ENCODE measurements at regions of chr21 and their contacts with region 1.

Region 1: GRCh38 chr21:42107881-42108553 is 36.9 kb downstream of the UMODL1 start:
- DNase-seq: peak; percentile 45 to 87 (median 68)
- ATAC-seq: peak; percentile 99
- H3K4me3 ChIP-seq: peak overlapping the region in 1 of 2 experiments; percentile 28
- H3K4me3 Mint-ChIP-seq: peak overlapping the region; percentile 69
- H3K27ac ChIP-seq: no peak overlapping the region
- H3K27ac Mint-ChIP-seq: peak overlapping the region; percentile 62
- H3K4me1 ChIP-seq: peaks cover 20% of the 10 kb centered on the region
- H3K4me1 Mint-ChIP-seq: peaks cover 9% of the 10 kb centered on the region
- H3K27me3 ChIP-seq: no peaks in the 10 kb centered on the region
- H3K27me3 Mint-ChIP-seq: peaks cover 4% of the 10 kb centered on the region
- CTCF ChIP-seq: peak; percentile 74

Region 2: DNA sequence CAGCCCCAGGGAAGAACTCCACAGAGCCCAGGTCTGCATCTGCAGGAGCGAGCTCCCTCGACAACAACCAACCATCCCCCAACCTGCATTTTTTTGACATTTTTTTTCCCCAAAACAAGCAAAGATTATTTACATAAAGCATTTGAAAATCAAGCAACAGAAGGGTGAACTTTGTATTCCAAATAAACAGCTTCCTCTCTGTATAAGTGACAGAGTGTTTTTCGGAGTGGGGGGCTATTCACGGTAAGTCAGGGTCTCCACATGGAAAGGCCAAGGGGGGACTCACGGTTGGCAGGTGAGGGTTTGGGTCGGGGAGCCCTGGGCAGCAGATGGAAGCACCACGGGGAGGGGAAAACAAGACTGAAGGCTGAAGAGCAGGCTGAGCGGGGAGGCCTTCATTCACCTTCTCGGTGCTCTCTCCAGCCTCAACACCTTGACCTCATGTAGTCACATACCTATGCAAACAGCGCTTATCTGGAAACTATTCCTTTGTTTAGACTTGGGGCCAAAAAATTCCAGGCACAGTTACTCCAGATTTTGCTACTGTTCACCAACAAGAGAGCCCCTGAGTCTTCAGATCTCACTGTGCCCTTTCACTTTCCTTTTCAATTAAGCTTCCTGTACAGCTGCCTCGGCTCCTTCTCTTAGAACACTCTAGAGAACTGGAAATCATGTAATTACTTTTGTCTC is 181.8 kb before region 1 on chr21:
- CTCF ChIA-PET with region 1: interaction called, 4 read pairs
- POLR2A ChIA-PET with region 1: interaction called, 4 read pairs
- intact Hi-C with region 1: loop called in 1 of 2 experiments (anchors 1 kb)
- DNase-seq: peak in 8 of 9 experiments; percentile 14 to 81 (median 32)
- ATAC-seq: peak; percentile 91
- H3K4me3 ChIP-seq: peak overlapping the region; percentile 53 to 64
- H3K4me3 Mint-ChIP-seq: peak overlapping the region; percentile 96
- H3K27ac ChIP-seq: peak overlapping the region; percentile 72 to 89
- H3K27ac Mint-ChIP-seq: peak overlapping the region; percentile 99
- H3K4me1 ChIP-seq: peaks cover 42% of the 10 kb centered on the region
- H3K4me1 Mint-ChIP-seq: peaks cover 55% of the 10 kb centered on the region
- H3K27me3 ChIP-seq: no peaks in the 10 kb centered on the region
- H3K27me3 Mint-ChIP-seq: no peaks in the 10 kb centered on the region
- CTCF ChIP-seq: no peak

Region 3: GRCh38 chr21:42002421-42002958 is 105.5 kb before region 1 on chr21:
- CTCF ChIA-PET with region 1: interaction called, 73 read pairs
- POLR2A ChIA-PET with region 1: no interaction called
- intact Hi-C with region 1: no loop called
- DNase-seq: peak in 7 of 9 experiments; percentile 15 to 54 (median 30)
- ATAC-seq: peak; percentile 68
- H3K4me3 ChIP-seq: no peak overlapping the region
- H3K4me3 Mint-ChIP-seq: peak overlapping the region; percentile 1
- H3K27ac ChIP-seq: no peak overlapping the region
- H3K27ac Mint-ChIP-seq: no peak overlapping the region
- H3K4me1 ChIP-seq: no peaks in the 10 kb centered on the region
- H3K4me1 Mint-ChIP-seq: peaks cover 28% of the 10 kb centered on the region
- H3K27me3 ChIP-seq: no peaks in the 10 kb centered on the region
- H3K27me3 Mint-ChIP-seq: no peaks in the 10 kb centered on the region
- CTCF ChIP-seq: no peak

Region 4: GRCh38 chr21:42073145-42074092 is 34.6 kb before region 1 on chr21:
- CTCF ChIA-PET with region 1: interaction called, 24 read pairs
- POLR2A ChIA-PET with region 1: interaction called, 3 read pairs
- intact Hi-C with region 1: no loop called
- DNase-seq: no peak
- ATAC-seq: no peak
- H3K4me3 ChIP-seq: no peak overlapping the region
- H3K4me3 Mint-ChIP-seq: peak overlapping the region; percentile 8
- H3K27ac ChIP-seq: no peak overlapping the region
- H3K27ac Mint-ChIP-seq: no peak overlapping the region
- H3K4me1 ChIP-seq: no peaks in the 10 kb centered on the region
- H3K4me1 Mint-ChIP-seq: peaks cover 17% of the 10 kb centered on the region
- H3K27me3 ChIP-seq: peaks cover 0 to 3% of the 10 kb centered on the region in 2 experiments
- H3K27me3 Mint-ChIP-seq: no peaks in the 10 kb centered on the region
- CTCF ChIP-seq: no peak

Region 5: DNA sequence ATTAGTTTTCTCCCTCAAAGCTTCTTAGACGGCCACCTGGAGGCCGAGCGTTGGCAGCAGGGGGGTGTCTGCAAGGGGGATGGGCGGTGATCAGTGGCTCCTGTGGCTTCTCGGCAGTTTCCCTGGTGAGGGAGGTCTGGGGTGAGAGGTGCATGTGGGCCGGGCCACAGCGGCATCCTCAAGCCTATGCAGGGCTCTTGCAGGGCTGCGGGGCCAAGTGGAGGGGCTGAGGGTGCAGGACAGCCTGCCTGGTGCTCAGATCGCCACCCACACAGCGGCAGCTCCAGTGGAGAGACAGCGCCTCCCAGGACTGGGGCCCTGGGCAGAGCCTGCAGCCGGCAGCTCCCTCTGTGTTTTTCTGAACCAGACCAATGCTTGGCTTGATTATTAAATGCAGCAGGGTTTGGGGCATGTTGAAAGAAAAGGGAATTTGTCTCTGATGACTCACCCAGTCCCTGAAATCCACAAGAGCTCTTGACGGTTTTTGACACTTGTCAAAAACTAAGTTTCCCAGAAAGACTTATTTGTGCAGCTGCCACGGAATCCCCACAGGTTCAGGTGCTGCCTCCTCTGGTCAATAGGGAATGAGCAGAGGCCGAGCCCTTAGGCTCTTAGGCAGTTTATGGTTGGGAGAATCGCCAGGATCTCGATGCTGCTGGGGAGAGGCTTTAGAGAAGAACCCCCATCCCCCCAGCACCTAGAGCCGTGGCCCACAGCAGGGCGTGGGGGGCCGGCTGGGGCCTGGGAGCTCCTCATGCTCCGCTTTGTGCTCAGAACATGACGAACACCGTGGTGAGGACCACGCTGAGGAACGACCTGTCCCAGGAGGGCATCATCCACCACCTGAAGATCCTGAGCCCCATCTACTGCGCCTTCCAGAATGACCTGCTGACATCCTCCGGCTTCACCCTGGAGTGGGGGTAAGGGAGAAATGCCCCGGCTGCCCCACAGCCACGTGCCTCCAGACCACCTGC is 17.8 kb after region 1 on chr21:
- CTCF ChIA-PET with region 1: interaction called, 10 read pairs
- POLR2A ChIA-PET with region 1: no interaction called
- intact Hi-C with region 1: no loop called
- DNase-seq: no peak
- ATAC-seq: no peak
- H3K4me3 ChIP-seq: no peak overlapping the region
- H3K4me3 Mint-ChIP-seq: no peak overlapping the region
- H3K27ac ChIP-seq: no peak overlapping the region
- H3K27ac Mint-ChIP-seq: no peak overlapping the region
- H3K4me1 ChIP-seq: no peaks in the 10 kb centered on the region
- H3K4me1 Mint-ChIP-seq: peaks cover 7% of the 10 kb centered on the region
- H3K27me3 ChIP-seq: peaks cover 0 to 16% of the 10 kb centered on the region in 2 experiments
- H3K27me3 Mint-ChIP-seq: peaks cover 34% of the 10 kb centered on the region
- CTCF ChIP-seq: no peak

Region 6: GRCh38 chr21:42199488-42200458 is 91.8 kb after region 1 on chr21:
- CTCF ChIA-PET with region 1: no interaction called
- POLR2A ChIA-PET with region 1: no interaction called
- intact Hi-C with region 1: no loop called
- DNase-seq: peak in 4 of 9 experiments; percentile 34 to 76 (median 48)
- ATAC-seq: peak; percentile 77
- H3K4me3 ChIP-seq: no peak overlapping the region
- H3K4me3 Mint-ChIP-seq: peak overlapping the region; percentile 5
- H3K27ac ChIP-seq: peak overlapping the region; percentile 15 to 40
- H3K27ac Mint-ChIP-seq: peak overlapping the region; percentile 89
- H3K4me1 ChIP-seq: peaks cover 39% of the 10 kb centered on the region
- H3K4me1 Mint-ChIP-seq: peaks cover 68% of the 10 kb centered on the region
- H3K27me3 ChIP-seq: no peaks in the 10 kb centered on the region
- H3K27me3 Mint-ChIP-seq: no peaks in the 10 kb centered on the region
- CTCF ChIP-seq: no peak

Region 7: DNA sequence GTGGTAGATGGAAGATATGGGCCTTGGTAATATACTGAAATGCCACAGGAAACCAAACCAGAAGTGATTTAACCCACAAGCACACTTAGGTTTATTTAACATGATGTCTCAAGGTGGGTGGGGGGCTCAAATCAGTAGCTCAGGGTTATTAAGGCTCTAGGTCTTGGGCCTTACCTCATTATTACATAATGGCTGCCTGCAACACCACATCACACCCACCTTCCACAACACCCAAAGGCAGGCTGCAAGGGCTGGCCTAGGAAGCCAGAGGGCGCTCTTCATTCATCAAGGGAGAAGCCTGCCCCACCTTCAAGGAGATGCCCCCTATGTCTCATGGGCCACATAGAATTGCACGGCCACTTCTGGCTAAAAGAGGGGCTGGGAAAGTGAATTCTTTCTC is 252.3 kb after region 1 on chr21:
- CTCF ChIA-PET with region 1: no interaction called
- POLR2A ChIA-PET with region 1: no interaction called
- intact Hi-C with region 1: no loop called
- DNase-seq: peak in 2 of 9 experiments; percentile 17 to 43
- ATAC-seq: no peak
- H3K4me3 ChIP-seq: no peak overlapping the region
- H3K4me3 Mint-ChIP-seq: no peak overlapping the region
- H3K27ac ChIP-seq: no peak overlapping the region
- H3K27ac Mint-ChIP-seq: no peak overlapping the region
- H3K4me1 ChIP-seq: peaks cover 8% of the 10 kb centered on the region
- H3K4me1 Mint-ChIP-seq: peaks cover 14% of the 10 kb centered on the region
- H3K27me3 ChIP-seq: no peaks in the 10 kb centered on the region
- H3K27me3 Mint-ChIP-seq: no peaks in the 10 kb centered on the region
- CTCF ChIP-seq: no peak